ENCODE measurements at regions of chr3 and their contacts with region 1.

Region 1: DNA sequence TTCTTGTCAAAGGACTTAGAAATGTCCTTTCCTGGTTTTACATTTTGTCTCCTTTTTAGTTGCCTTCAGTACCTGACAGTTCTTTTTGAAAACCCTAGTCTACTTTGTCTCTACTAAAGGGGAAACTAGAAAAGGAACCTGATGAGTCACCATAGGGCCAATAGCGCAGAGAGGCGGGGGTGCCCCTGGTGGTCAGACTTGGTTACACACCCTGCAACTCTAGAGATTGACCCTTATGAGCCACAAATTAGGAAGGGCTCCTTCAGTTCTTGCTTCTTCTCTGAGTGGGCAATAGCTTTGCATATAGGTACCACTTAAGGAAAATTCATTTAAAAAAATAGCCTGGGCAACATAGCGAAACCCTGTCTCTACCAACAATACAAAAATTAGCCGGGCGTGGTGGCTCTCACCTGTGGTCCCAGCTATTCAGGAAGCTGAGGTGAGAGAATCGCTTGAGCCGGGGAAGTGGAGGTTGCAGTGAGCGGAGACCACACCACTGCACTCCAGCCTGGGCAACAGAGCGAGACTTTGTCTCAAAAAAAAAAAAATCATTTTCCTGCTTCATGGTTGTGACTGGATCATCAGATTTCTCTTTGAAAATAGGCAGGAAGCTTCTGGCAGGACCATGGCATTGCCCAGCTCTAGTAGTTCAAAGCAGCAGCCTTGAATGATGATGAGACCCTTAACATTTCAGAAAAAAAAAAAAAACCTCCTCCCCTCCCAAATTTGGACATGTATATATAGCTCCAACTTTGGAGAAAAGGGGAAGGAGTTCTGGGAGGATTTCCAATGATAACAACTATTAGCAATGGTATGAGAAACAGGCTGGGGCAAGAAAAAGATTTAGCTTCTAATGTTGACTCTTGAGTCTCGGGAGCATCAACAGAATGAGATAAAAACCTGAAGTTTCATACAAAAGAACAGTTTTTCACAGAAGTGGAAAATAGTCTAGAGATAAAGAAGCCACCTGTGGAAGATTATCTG is 45.2 kb upstream of the RASA2 start:
- DNase-seq: peak; percentile 90
- H3K4me3 Mint-ChIP-seq: no peak overlapping the region
- H3K27ac Mint-ChIP-seq: peak overlapping the region; percentile 94
- H3K4me1 Mint-ChIP-seq: peaks cover 51% of the 10 kb centered on the region
- H3K27me3 Mint-ChIP-seq: no peaks in the 10 kb centered on the region

Region 2: GRCh38 chr3:141231101-141231935 is 210.4 kb before region 1 on chr3 and contains the start of gene PXYLP1:
- CTCF ChIA-PET with region 1: interaction called, 10 read pairs
- POLR2A ChIA-PET with region 1: no interaction called
- intact Hi-C with region 1: no loop called
- DNase-seq: peak; percentile 95
- H3K4me3 Mint-ChIP-seq: peak within 1 kb of the TSS; percentile 85
- H3K27ac Mint-ChIP-seq: peak within 1 kb of the TSS; percentile 87
- H3K4me1 Mint-ChIP-seq: peaks cover 25% of the 10 kb centered on the region
- H3K27me3 Mint-ChIP-seq: no peaks in the 10 kb centered on the region
- total RNA-seq, gene PXYLP1: 9.0 to 11.6 TPM

Region 3: GRCh38 chr3:141311496-141312353 is 129.9 kb before region 1 on chr3:
- CTCF ChIA-PET with region 1: interaction called, 72 read pairs
- POLR2A ChIA-PET with region 1: interaction called, 4 read pairs
- intact Hi-C with region 1: loop called (anchors 1 kb)
- DNase-seq: peak; percentile 100
- H3K4me3 Mint-ChIP-seq: peak overlapping the region; percentile 89
- H3K27ac Mint-ChIP-seq: peak overlapping the region; percentile 90
- H3K4me1 Mint-ChIP-seq: peaks cover 49% of the 10 kb centered on the region
- H3K27me3 Mint-ChIP-seq: no peaks in the 10 kb centered on the region

Region 4: GRCh38 chr3:141370065-141370533 is 71.6 kb before region 1 on chr3:
- CTCF ChIA-PET with region 1: interaction called, 63 read pairs
- POLR2A ChIA-PET with region 1: no interaction called
- intact Hi-C with region 1: loop called (anchors 1 kb)
- DNase-seq: peak; percentile 68
- H3K4me3 Mint-ChIP-seq: no peak overlapping the region
- H3K27ac Mint-ChIP-seq: peak overlapping the region; percentile 40
- H3K4me1 Mint-ChIP-seq: peaks cover 58% of the 10 kb centered on the region
- H3K27me3 Mint-ChIP-seq: no peaks in the 10 kb centered on the region

Region 5: GRCh38 chr3:141412087-141412935 is 29.4 kb before region 1 on chr3:
- CTCF ChIA-PET with region 1: interaction called, 10 read pairs
- POLR2A ChIA-PET with region 1: interaction called, 11 read pairs
- intact Hi-C with region 1: loop called (anchors 1 kb)
- DNase-seq: peak; percentile 60
- H3K4me3 Mint-ChIP-seq: peak overlapping the region; percentile 70
- H3K27ac Mint-ChIP-seq: peak overlapping the region; percentile 92
- H3K4me1 Mint-ChIP-seq: peaks cover 87% of the 10 kb centered on the region
- H3K27me3 Mint-ChIP-seq: no peaks in the 10 kb centered on the region

Region 6: GRCh38 chr3:141452036-141452435 is 10.4 kb after region 1 on chr3:
- CTCF ChIA-PET with region 1: interaction called, 26 read pairs
- POLR2A ChIA-PET with region 1: no interaction called
- intact Hi-C with region 1: loop called (anchors 1 kb)
- DNase-seq: peak; percentile 50
- H3K4me3 Mint-ChIP-seq: no peak overlapping the region
- H3K27ac Mint-ChIP-seq: no peak overlapping the region
- H3K4me1 Mint-ChIP-seq: peaks cover 35% of the 10 kb centered on the region
- H3K27me3 Mint-ChIP-seq: no peaks in the 10 kb centered on the region

Measured in activated CD4-positive, alpha-beta memory T cell treated with anti-CD3 and anti-CD28 coated beads for 36 hours (primary cell).